Right cardiac atrium (tissue), 5 donors: ENCODE measurements at regions of chr9 and their contacts with region 1.

Region 1: GRCh38 chr9:19028835-19029451 is 4.1 kb downstream of the SAXO1 start:
- DNase-seq: peak in 2 of 3 donors; percentile 18 to 60
- ATAC-seq: peak; percentile 66 to 70
- H3K4me3 ChIP-seq: no peak overlapping the region
- H3K27ac ChIP-seq: no peak overlapping the region
- H3K4me1 ChIP-seq: no peaks in the 10 kb centered on the region
- H3K27me3 ChIP-seq: no peaks in the 10 kb centered on the region

Region 2: DNA sequence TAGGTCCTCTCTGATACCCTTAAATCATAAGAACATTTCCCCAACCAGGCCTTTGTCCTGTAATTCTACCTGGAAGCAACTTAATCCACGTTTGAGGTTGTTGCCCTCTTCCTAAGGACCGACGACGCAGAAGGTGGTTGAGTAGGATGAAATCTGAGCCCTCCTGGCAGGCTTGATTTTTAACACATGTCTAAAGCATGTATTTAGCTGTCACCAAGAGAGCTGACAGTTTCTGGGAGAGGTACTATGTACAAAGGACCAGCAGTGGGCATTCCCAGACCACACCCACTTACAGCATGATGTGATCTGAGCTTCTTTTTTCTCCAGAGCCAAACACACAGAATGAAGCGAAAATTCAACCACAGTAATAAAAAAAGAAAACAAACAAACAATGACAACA is 1189.2 kb before region 1 on chr9:
- intact Hi-C with region 1: loop called in 1 of 4 experiments (anchors 10 kb)
- DNase-seq: no peak
- ATAC-seq: no peak
- H3K4me3 ChIP-seq: no peak overlapping the region
- H3K27ac ChIP-seq: no peak overlapping the region
- H3K4me1 ChIP-seq: peaks cover 1% of the 10 kb centered on the region
- H3K27me3 ChIP-seq: no peaks in the 10 kb centered on the region

Region 3: GRCh38 chr9:18255158-18255629 is 773.7 kb before region 1 on chr9:
- intact Hi-C with region 1: loop called in 3 of 4 experiments (anchors 5 to 10 kb)
- DNase-seq: peak; percentile 79 to 84 (median 80)
- ATAC-seq: peak; percentile 86 to 93
- H3K4me3 ChIP-seq: no peak overlapping the region
- H3K27ac ChIP-seq: no peak overlapping the region
- H3K4me1 ChIP-seq: peaks cover 2% of the 10 kb centered on the region
- H3K27me3 ChIP-seq: no peaks in the 10 kb centered on the region

Region 4: DNA sequence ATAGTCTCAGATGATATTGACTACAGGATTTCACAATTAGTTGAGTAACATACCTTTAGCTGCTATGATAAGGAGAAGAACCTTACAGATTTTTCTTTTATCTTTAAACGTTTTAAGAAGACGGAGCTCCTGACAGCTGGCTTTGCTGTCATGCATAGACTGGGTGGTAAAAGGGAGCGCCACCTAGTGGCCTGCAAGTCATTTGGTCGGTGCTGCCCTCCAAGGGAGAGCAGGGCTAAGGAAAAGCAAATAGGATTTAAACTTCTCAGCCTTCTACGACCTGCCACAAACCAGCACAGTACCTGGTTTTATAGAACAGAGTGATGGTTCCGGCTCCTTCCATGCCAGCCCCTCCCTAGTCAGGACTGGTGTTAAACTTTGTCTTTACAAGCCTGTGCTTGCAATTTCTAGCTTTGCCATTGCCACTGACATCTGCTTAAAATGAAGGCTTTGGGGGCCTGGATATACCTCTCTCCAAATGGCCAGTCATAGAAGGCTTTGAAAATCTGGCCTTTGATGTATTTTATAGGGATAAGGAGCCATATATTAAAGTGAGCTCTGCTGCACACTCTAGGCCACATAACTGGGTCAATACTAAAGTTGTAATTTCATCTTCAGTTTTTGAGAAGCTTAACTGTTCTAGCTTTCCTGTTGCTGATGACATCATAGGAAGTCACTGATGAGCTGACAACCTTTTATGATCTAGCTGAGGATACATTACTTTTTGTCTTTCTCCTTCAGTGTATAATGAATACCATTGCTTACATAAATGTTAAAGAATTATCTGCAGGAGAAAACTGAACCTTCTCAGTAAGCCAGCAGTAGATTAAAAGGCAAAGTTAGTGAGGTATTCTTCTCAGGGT is 586.1 kb before region 1 on chr9:
- intact Hi-C with region 1: loop called in 2 of 4 experiments (anchors 10 kb)
- DNase-seq: peak; percentile 71 to 83 (median 83)
- ATAC-seq: peak; percentile 74 to 85
- H3K4me3 ChIP-seq: no peak overlapping the region
- H3K27ac ChIP-seq: no peak overlapping the region
- H3K4me1 ChIP-seq: peaks cover 1% of the 10 kb centered on the region
- H3K27me3 ChIP-seq: no peaks in the 10 kb centered on the region

Region 5: GRCh38 chr9:19828576-19829109 is 799.7 kb after region 1 on chr9:
- intact Hi-C with region 1: no loop called
- DNase-seq: no peak
- ATAC-seq: no peak
- H3K4me3 ChIP-seq: no peak overlapping the region
- H3K27ac ChIP-seq: no peak overlapping the region
- H3K4me1 ChIP-seq: no peaks in the 10 kb centered on the region
- H3K27me3 ChIP-seq: no peaks in the 10 kb centered on the region